PC-9 (cell line): ENCODE measurements at regions of chr5 and their contacts with region 1.

Region 1: GRCh38 chr5:56039985-56040384 is 45.2 kb upstream of the IL6ST start:
- DNase-seq: peak in 1 of 2 experiments; percentile 54
- H3K4me3 ChIP-seq: no peak overlapping the region
- H3K27ac ChIP-seq: no peak overlapping the region
- H3K4me1 ChIP-seq: peaks cover 13% of the 10 kb centered on the region
- H3K27me3 ChIP-seq: no peaks in the 10 kb centered on the region
- CTCF ChIP-seq: no peak

Region 2: GRCh38 chr5:56050551-56051255 is 10.7 kb after region 1 on chr5:
- CTCF ChIA-PET with region 1: no interaction called
- POLR2A ChIA-PET with region 1: interaction called, 10 read pairs
- intact Hi-C with region 1: no loop called
- DNase-seq: no peak
- H3K4me3 ChIP-seq: no peak overlapping the region
- H3K27ac ChIP-seq: no peak overlapping the region
- H3K4me1 ChIP-seq: 0 out of 2 replicates have a peak, but pooled peaks cover 3% of the 10 kb centered on the region
- H3K27me3 ChIP-seq: no peaks in the 10 kb centered on the region
- CTCF ChIP-seq: no peak

Region 3: GRCh38 chr5:56080375-56081052 is 40.5 kb after region 1 on chr5:
- CTCF ChIA-PET with region 1: no interaction called
- POLR2A ChIA-PET with region 1: no interaction called
- intact Hi-C with region 1: no loop called
- DNase-seq: no peak
- H3K4me3 ChIP-seq: no peak overlapping the region
- H3K27ac ChIP-seq: no peak overlapping the region
- H3K4me1 ChIP-seq: peaks cover 4% of the 10 kb centered on the region
- H3K27me3 ChIP-seq: no peaks in the 10 kb centered on the region
- CTCF ChIP-seq: no peak